CD8-positive, alpha-beta T cell (primary cell): ENCODE measurements at regions of chr3 and their contacts with region 1.

Region 1: GRCh38 chr3:123201566-123202427 is at the start of gene SEC22A:
- DNase-seq: peak; percentile 91 to 99 (median 96)
- ATAC-seq: peak; percentile 96
- H3K4me3 ChIP-seq: peak within 1 kb of the TSS; percentile 82 to 96
- H3K4me3 Mint-ChIP-seq: peak within 1 kb of the TSS; percentile 83
- H3K27ac ChIP-seq: peak within 1 kb of the TSS; percentile 94 to 95
- H3K27ac Mint-ChIP-seq: peak within 1 kb of the TSS; percentile 98
- H3K4me1 ChIP-seq: peaks cover 18% of the 10 kb centered on the region
- H3K4me1 Mint-ChIP-seq: peaks cover 26% of the 10 kb centered on the region
- H3K27me3 ChIP-seq: no peaks in the 10 kb centered on the region
- H3K27me3 Mint-ChIP-seq: no peaks in the 10 kb centered on the region
- CTCF ChIP-seq: no peak
- total RNA-seq, gene SEC22A: 8.6 to 9.1 TPM

Region 2: DNA sequence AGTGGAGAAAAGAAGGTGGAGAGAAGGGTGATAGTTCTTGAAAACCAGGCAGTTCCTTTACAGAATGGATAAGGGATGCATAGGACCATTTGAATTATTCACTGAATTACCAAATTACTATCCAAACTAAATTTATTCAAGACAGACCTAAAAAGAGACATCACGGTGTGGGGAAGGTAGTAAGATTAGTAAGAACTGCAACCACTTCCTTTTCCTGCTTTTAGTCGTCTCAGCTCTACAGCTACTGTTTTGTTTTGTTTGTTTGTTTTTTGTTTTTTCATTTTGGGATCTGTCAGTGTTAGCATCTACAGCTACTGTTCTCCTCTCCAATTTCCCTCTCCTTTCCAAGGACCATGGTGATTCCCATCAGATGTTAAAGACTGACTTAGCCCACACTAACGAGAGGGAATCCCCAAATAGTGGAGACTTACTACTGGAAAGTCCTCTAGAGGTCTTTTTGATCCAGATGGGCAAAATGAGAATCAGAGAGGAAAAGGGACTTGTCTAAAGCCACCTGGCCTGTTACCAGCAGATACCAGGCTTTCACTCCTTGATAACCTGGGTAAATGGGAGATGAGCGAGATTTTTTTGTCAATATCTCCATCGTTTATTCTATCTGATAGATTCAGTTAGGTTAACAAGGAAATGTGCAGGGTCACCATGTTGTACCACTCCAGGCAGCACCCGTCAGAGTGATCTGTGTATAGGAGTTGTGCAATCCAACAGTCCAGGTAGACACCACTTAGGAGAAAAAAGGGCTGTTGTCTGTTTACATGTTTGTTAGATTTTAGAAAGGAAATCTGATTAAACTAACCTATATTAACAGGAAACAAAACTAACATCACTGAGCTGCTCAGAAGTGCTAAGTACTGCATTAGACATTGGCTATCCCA is 1547.1 kb before region 1 on chr3:
- CTCF ChIA-PET with region 1: no interaction called
- POLR2A ChIA-PET with region 1: no interaction called
- intact Hi-C with region 1: loop called in 1 of 2 experiments (anchors 5 kb)
- DNase-seq: peak in 2 of 9 experiments; percentile 20 to 51
- ATAC-seq: peak; percentile 81
- H3K4me3 ChIP-seq: peak overlapping the region in 1 of 2 experiments; percentile 7
- H3K4me3 Mint-ChIP-seq: peak overlapping the region; percentile 61
- H3K27ac ChIP-seq: peak overlapping the region; percentile 8 to 70
- H3K27ac Mint-ChIP-seq: peak overlapping the region; percentile 91
- H3K4me1 ChIP-seq: peaks cover 76% of the 10 kb centered on the region
- H3K4me1 Mint-ChIP-seq: peaks cover 86% of the 10 kb centered on the region
- H3K27me3 ChIP-seq: no peaks in the 10 kb centered on the region
- H3K27me3 Mint-ChIP-seq: no peaks in the 10 kb centered on the region
- CTCF ChIP-seq: no peak

Region 3: GRCh38 chr3:121834696-121835464 is 1366.9 kb before region 1 on chr3 and contains the starts of genes EAF2 and IQCB1:
- CTCF ChIA-PET with region 1: no interaction called
- POLR2A ChIA-PET with region 1: no interaction called
- intact Hi-C with region 1: loop called in 1 of 2 experiments (anchors 5 kb)
- DNase-seq: peak; percentile 91 to 98 (median 95)
- ATAC-seq: peak; percentile 97
- H3K4me3 ChIP-seq: peak within 1 kb of the TSS; percentile 74 to 91
- H3K4me3 Mint-ChIP-seq: peak within 1 kb of the TSS; percentile 93
- H3K27ac ChIP-seq: peak within 1 kb of the TSS; percentile 82 to 87
- H3K27ac Mint-ChIP-seq: peak within 1 kb of the TSS; percentile 94
- H3K4me1 ChIP-seq: peaks cover 25% of the 10 kb centered on the region
- H3K4me1 Mint-ChIP-seq: peaks cover 53% of the 10 kb centered on the region
- H3K27me3 ChIP-seq: no peaks in the 10 kb centered on the region
- H3K27me3 Mint-ChIP-seq: no peaks in the 10 kb centered on the region
- CTCF ChIP-seq: no peak
- total RNA-seq, gene EAF2: 3.5 to 3.7 TPM
- total RNA-seq, gene IQCB1: 36.5 to 42.2 TPM

Region 4: GRCh38 chr3:122564155-122564912 is 637.5 kb before region 1 on chr3 and contains the starts of genes DTX3L and PARP9:
- CTCF ChIA-PET with region 1: no interaction called
- POLR2A ChIA-PET with region 1: no interaction called
- intact Hi-C with region 1: loop called (anchors 2 to 10 kb)
- DNase-seq: peak; percentile 39 to 91 (median 80)
- ATAC-seq: peak; percentile 93
- H3K4me3 ChIP-seq: peak within 1 kb of the TSS; percentile 81 to 85
- H3K4me3 Mint-ChIP-seq: peak within 1 kb of the TSS; percentile 92
- H3K27ac ChIP-seq: peak within 1 kb of the TSS; percentile 83 to 88
- H3K27ac Mint-ChIP-seq: peak within 1 kb of the TSS; percentile 96
- H3K4me1 ChIP-seq: peaks cover 39% of the 10 kb centered on the region
- H3K4me1 Mint-ChIP-seq: peaks cover 75% of the 10 kb centered on the region
- H3K27me3 ChIP-seq: no peaks in the 10 kb centered on the region
- H3K27me3 Mint-ChIP-seq: no peaks in the 10 kb centered on the region
- CTCF ChIP-seq: no peak
- total RNA-seq, gene DTX3L: 14.1 to 14.3 TPM
- total RNA-seq, gene PARP9: 12.0 to 12.1 TPM

Region 5: GRCh38 chr3:122977746-122978466 is 223.9 kb before region 1 on chr3:
- CTCF ChIA-PET with region 1: no interaction called
- POLR2A ChIA-PET with region 1: no interaction called
- intact Hi-C with region 1: no loop called
- DNase-seq: no peak
- ATAC-seq: no peak
- H3K4me3 ChIP-seq: no peak overlapping the region
- H3K4me3 Mint-ChIP-seq: no peak overlapping the region
- H3K27ac ChIP-seq: no peak overlapping the region
- H3K27ac Mint-ChIP-seq: no peak overlapping the region
- H3K4me1 ChIP-seq: peaks cover 8% of the 10 kb centered on the region
- H3K4me1 Mint-ChIP-seq: peaks cover 13% of the 10 kb centered on the region
- H3K27me3 ChIP-seq: no peaks in the 10 kb centered on the region
- H3K27me3 Mint-ChIP-seq: peaks cover 6% of the 10 kb centered on the region
- CTCF ChIP-seq: no peak

Region 6: DNA sequence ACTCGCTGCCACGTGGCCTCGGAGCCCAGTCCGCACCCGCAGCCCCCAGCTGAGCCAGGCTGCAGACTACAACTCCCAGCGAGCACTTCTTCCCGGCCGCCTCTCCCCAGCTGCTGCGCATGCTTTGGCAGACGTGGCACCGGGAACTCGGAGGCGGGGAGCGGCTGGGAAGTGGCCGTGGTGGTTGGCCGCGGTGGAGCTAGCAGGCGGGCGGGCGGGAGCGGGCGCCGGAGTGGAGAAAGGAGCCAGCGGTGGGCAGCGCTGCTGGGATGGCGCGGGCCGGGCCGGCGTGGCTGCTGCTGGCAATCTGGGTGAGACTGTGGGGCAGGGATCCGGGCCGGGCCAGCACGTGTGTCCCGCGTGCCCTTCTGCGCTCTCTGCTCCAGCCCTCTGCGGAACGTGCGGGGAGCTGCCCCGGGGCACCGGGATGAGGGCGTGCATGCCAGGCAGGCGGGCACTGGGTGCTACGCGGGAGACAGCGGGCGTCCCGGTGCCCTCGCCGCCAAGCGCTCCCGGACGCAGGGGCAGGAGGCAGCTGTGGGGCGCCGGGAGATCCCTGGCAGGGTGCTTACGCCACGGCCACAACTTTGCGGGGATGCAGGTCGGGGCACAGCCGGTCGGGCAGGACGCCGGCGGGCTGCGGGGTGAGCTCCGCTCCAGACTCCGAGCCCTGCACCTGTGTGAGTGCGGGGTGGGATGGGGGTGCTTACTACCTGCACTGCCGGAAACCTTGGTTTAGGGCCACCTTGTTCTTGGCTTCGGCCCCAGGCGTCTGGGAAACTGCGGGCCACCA is 134.7 kb before region 1 on chr3 and contains the start of gene PDIA5:
- CTCF ChIA-PET with region 1: no interaction called
- POLR2A ChIA-PET with region 1: no interaction called
- intact Hi-C with region 1: loop called in 1 of 2 experiments (anchors 5 kb)
- DNase-seq: peak in 8 of 9 experiments; percentile 14 to 71 (median 42)
- ATAC-seq: peak; percentile 56
- H3K4me3 ChIP-seq: peak within 1 kb of the TSS; percentile 53 to 61
- H3K4me3 Mint-ChIP-seq: peak within 1 kb of the TSS; percentile 82
- H3K27ac ChIP-seq: no peak within 1 kb of the TSS
- H3K27ac Mint-ChIP-seq: peak within 1 kb of the TSS; percentile 46
- H3K4me1 ChIP-seq: peaks cover 11% of the 10 kb centered on the region
- H3K4me1 Mint-ChIP-seq: peaks cover 16% of the 10 kb centered on the region
- H3K27me3 ChIP-seq: peaks cover 0 to 3% of the 10 kb centered on the region in 2 experiments
- H3K27me3 Mint-ChIP-seq: no peaks in the 10 kb centered on the region
- CTCF ChIP-seq: no peak
- total RNA-seq, gene PDIA5: 2.7 to 3.1 TPM

Region 7: DNA sequence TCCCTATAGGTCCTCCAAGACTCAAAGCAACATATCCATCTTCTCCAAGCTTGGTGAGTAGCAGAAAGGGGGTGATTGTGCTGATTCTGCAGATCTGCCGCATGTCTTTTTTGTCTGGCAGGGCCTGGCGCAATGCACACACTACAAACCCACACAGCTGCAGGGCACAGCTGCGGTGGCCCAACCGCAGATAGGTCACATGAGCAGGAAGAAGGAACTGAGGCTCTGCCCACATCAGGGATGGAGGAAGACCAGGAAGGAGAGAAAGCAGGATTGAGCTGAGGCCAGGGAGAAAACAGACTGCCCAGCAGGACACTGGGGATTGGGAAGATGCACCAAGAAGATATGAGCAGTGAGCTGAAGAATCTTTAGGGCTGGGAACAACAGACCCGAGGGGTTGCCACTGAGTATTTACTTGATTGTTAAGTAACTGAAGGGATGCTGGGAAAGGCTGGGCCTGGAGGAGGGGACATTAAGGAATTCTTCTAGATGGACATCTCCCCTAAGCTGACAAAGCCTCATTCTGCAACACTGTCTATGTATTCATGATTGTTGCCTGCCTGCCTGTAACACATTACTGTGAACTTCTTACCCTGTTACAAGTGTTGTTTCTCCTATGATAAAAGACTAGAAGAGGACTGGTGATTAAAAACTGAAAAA is 555.6 kb after region 1 on chr3:
- CTCF ChIA-PET with region 1: no interaction called
- POLR2A ChIA-PET with region 1: no interaction called
- intact Hi-C with region 1: no loop called
- DNase-seq: no peak
- ATAC-seq: no peak
- H3K4me3 ChIP-seq: no peak overlapping the region
- H3K4me3 Mint-ChIP-seq: no peak overlapping the region
- H3K27ac ChIP-seq: no peak overlapping the region
- H3K27ac Mint-ChIP-seq: no peak overlapping the region
- H3K4me1 ChIP-seq: no peaks in the 10 kb centered on the region
- H3K4me1 Mint-ChIP-seq: peaks cover 3% of the 10 kb centered on the region
- H3K27me3 ChIP-seq: no peaks in the 10 kb centered on the region
- H3K27me3 Mint-ChIP-seq: peaks cover 2% of the 10 kb centered on the region
- CTCF ChIP-seq: no peak

Region 8: GRCh38 chr3:124174476-124174875 is 972.7 kb after region 1 on chr3:
- CTCF ChIA-PET with region 1: no interaction called
- POLR2A ChIA-PET with region 1: no interaction called
- intact Hi-C with region 1: no loop called
- DNase-seq: no peak
- ATAC-seq: no peak
- H3K4me3 ChIP-seq: no peak overlapping the region
- H3K4me3 Mint-ChIP-seq: no peak overlapping the region
- H3K27ac ChIP-seq: no peak overlapping the region
- H3K27ac Mint-ChIP-seq: no peak overlapping the region
- H3K4me1 ChIP-seq: no peaks in the 10 kb centered on the region
- H3K4me1 Mint-ChIP-seq: no peaks in the 10 kb centered on the region
- H3K27me3 ChIP-seq: no peaks in the 10 kb centered on the region
- H3K27me3 Mint-ChIP-seq: peaks cover 8% of the 10 kb centered on the region
- CTCF ChIP-seq: no peak